ENCODE measurements at regions of chr4 and their contacts with region 1.

Region 1: GRCh38 chr4:138680989-138681604 is 334.5 kb upstream of the NOCT start:
- DNase-seq: peak in 1 of 2 donors; percentile 85
- H3K4me3 ChIP-seq: no peak overlapping the region
- H3K27ac ChIP-seq: no peak overlapping the region
- H3K4me1 ChIP-seq: peaks cover 2 to 3% of the 10 kb centered on the region in 2 donors
- H3K27me3 ChIP-seq: no peaks in the 10 kb centered on the region
- CTCF ChIP-seq: peak; percentile 74 to 91 (median 85)

Region 2: GRCh38 chr4:137124278-137124932 is 1556.7 kb before region 1 on chr4:
- intact Hi-C with region 1: loop called (anchors 5 kb)
- DNase-seq: no peak
- H3K4me3 ChIP-seq: peak overlapping the region; percentile 46 to 56
- H3K27ac ChIP-seq: no peak overlapping the region
- H3K4me1 ChIP-seq: no peaks in the 10 kb centered on the region
- H3K27me3 ChIP-seq: no peaks in the 10 kb centered on the region
- CTCF ChIP-seq: peak; percentile 50 to 75 (median 69)

Region 3: GRCh38 chr4:138035781-138036258 is 645.3 kb before region 1 on chr4:
- intact Hi-C with region 1: loop called (anchors 1 kb)
- DNase-seq: peak in 1 of 2 donors; percentile 59
- H3K4me3 ChIP-seq: no peak overlapping the region
- H3K27ac ChIP-seq: no peak overlapping the region
- H3K4me1 ChIP-seq: no peaks in the 10 kb centered on the region
- H3K27me3 ChIP-seq: no peaks in the 10 kb centered on the region
- CTCF ChIP-seq: peak; percentile 45 to 70 (median 50)

Region 4: GRCh38 chr4:138090150-138090917 is 590.8 kb before region 1 on chr4:
- intact Hi-C with region 1: loop called (anchors 1 kb)
- DNase-seq: peak in 1 of 2 donors; percentile 68
- H3K4me3 ChIP-seq: peak overlapping the region; percentile 39 to 48
- H3K27ac ChIP-seq: no peak overlapping the region
- H3K4me1 ChIP-seq: peaks cover 2% of the 10 kb centered on the region in 2 donors
- H3K27me3 ChIP-seq: no peaks in the 10 kb centered on the region
- CTCF ChIP-seq: peak; percentile 50 to 79 (median 73)

Region 5: GRCh38 chr4:138334346-138335016 is 346.6 kb before region 1 on chr4:
- intact Hi-C with region 1: no loop called
- DNase-seq: no peak
- H3K4me3 ChIP-seq: no peak overlapping the region
- H3K27ac ChIP-seq: no peak overlapping the region
- H3K4me1 ChIP-seq: no peaks in the 10 kb centered on the region
- H3K27me3 ChIP-seq: no peaks in the 10 kb centered on the region
- CTCF ChIP-seq: no peak

Region 6: DNA sequence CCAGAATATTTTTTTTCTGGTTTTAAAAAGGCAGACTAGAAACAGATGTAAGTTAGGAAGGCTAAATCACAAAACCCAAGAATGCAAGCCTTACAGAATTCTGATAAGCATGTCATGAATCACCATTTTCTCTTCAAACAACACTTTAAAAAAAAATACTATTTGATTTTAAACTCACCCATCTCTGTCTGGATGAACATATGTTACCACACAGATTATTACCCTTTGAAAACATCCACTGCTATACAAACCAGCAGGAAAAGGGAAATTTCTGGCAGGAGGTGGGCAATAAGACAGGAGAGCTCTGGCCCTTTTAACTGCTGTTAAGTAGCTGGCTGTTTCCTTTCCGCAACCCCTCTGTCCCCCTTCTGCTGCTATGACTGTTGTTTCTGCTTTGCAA is 16.8 kb after region 1 on chr4:
- intact Hi-C with region 1: no loop called
- DNase-seq: no peak
- H3K4me3 ChIP-seq: no peak overlapping the region
- H3K27ac ChIP-seq: no peak overlapping the region
- H3K4me1 ChIP-seq: no peaks in the 10 kb centered on the region
- H3K27me3 ChIP-seq: no peaks in the 10 kb centered on the region
- CTCF ChIP-seq: no peak

Region 7: DNA sequence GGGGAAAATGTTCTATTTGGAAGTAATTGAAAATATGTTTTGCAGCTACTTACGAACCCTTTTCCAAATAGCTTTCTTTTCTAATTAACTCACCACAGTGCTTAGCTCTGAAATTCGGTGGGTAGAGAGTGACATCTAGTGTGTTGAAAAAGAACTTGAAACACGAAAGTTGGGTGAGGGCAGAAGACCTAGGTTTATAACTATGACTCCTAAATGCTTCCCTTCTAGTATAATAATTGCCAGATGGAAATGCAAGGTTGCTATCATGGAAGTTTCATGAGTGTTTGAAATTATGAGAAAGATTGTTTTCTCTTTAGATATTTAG is 257.2 kb after region 1 on chr4:
- intact Hi-C with region 1: loop called (anchors 2 kb)
- DNase-seq: no peak
- H3K4me3 ChIP-seq: no peak overlapping the region
- H3K27ac ChIP-seq: no peak overlapping the region
- H3K4me1 ChIP-seq: peaks cover 0 to 3% of the 10 kb centered on the region in 2 donors
- H3K27me3 ChIP-seq: no peaks in the 10 kb centered on the region
- CTCF ChIP-seq: peak; percentile 14 to 55 (median 25)